A673 (cell line): ENCODE measurements at regions of chr11 and their contacts with region 1.

Region 1: DNA sequence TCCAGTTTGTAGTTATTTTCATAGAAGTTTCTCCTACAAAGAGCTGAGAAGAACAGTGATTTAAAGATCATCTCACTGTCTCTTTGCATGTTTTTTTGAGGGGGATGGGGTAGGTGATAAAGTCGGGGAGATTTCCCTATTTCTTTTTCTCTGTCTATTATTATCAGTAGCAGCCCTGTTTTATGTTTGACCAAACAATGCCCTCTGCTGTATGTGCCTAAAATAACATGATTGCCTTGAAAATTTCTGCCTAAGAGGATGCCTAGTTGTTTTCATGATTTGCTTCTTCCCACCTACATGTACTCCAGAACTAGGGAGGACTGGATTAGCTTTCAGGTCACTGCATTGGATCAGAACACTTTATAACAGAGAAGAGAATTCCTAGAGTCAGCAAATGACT is 1330.2 kb downstream of the LRRC4C start:
- DNase-seq: peak; percentile 90
- H3K4me3 ChIP-seq: no peak overlapping the region
- H3K27ac ChIP-seq: peak overlapping the region; percentile 31
- H3K4me1 ChIP-seq: peaks cover 69% of the 10 kb centered on the region
- H3K27me3 ChIP-seq: no peaks in the 10 kb centered on the region
- CTCF ChIP-seq: peak; percentile 93

Region 2: GRCh38 chr11:38835984-38836383 is 1293.3 kb before region 1 on chr11:
- CTCF ChIA-PET with region 1: no interaction called
- POLR2A ChIA-PET with region 1: no interaction called
- intact Hi-C with region 1: loop called (anchors 5 kb)
- DNase-seq: peak; percentile 97
- H3K4me3 ChIP-seq: no peak overlapping the region
- H3K27ac ChIP-seq: peak overlapping the region; percentile 9
- H3K4me1 ChIP-seq: peaks cover 19% of the 10 kb centered on the region
- H3K27me3 ChIP-seq: no peaks in the 10 kb centered on the region
- CTCF ChIP-seq: no peak

Region 3: DNA sequence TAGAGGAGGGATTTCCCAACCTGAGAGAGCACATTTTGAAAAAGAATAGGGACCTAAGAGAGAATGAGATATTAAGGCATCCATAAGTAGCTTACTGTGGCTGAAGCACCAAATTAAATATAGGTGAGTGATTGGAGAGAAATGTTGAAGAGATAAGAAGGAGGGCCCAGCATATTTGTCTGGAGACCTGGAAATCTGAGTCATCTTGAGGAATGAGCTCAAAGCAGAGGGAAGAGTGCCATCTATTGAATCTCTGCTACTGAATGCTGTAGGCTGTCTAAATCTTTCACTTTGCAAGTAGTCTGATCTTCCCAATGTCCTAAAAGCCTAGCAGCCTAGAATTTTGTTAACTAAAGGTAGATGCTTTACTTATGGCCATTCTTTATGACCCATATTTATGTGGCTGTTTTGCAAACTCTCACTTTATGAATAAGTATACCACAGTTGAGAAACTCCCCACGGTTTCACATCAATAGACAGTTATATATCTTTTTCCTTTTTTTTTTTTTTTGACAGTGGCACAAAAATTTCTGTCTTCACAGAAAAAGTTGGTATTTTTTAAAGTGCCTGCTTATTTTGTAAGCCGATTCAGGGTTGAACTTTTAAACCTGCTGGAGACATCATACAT is 763.3 kb before region 1 on chr11:
- CTCF ChIA-PET with region 1: interaction called, 5 read pairs
- POLR2A ChIA-PET with region 1: no interaction called
- intact Hi-C with region 1: loop called (anchors 1 kb)
- DNase-seq: peak; percentile 96
- H3K4me3 ChIP-seq: no peak overlapping the region
- H3K27ac ChIP-seq: peak overlapping the region; percentile 56
- H3K4me1 ChIP-seq: peaks cover 32% of the 10 kb centered on the region
- H3K27me3 ChIP-seq: no peaks in the 10 kb centered on the region
- CTCF ChIP-seq: peak; percentile 99

Region 4: GRCh38 chr11:39628311-39628710 is 501.0 kb before region 1 on chr11:
- CTCF ChIA-PET with region 1: no interaction called
- POLR2A ChIA-PET with region 1: no interaction called
- intact Hi-C with region 1: loop called (anchors 5 kb)
- DNase-seq: no peak
- H3K4me3 ChIP-seq: no peak overlapping the region
- H3K27ac ChIP-seq: no peak overlapping the region
- H3K4me1 ChIP-seq: peaks cover 13% of the 10 kb centered on the region
- H3K27me3 ChIP-seq: no peaks in the 10 kb centered on the region
- CTCF ChIP-seq: no peak

Region 5: GRCh38 chr11:40183073-40184064 is 54.1 kb after region 1 on chr11:
- CTCF ChIA-PET with region 1: no interaction called
- POLR2A ChIA-PET with region 1: no interaction called
- intact Hi-C with region 1: no loop called
- DNase-seq: no peak
- H3K4me3 ChIP-seq: no peak overlapping the region
- H3K27ac ChIP-seq: no peak overlapping the region
- H3K4me1 ChIP-seq: peaks cover 4% of the 10 kb centered on the region
- H3K27me3 ChIP-seq: no peaks in the 10 kb centered on the region
- CTCF ChIP-seq: no peak

Region 6: DNA sequence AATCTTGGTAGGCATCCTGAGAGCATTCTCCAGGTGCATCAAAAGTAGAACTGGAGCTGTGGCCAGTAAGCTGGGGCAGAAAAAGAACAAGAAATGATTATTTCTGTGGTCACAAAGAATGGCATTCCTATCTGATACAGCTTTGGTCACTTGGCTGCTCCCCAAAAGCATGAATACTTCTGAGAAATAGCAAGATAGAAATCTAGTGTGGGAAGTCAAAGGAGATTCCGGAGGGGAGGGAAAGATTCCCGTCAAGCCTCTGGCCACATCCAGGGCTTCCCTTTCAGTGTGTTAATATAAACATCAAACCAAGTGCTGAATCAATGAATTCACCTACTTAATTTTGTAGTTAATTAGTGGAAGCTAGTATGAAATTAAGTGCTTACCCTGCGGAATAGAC is 144.8 kb after region 1 on chr11:
- CTCF ChIA-PET with region 1: no interaction called
- POLR2A ChIA-PET with region 1: no interaction called
- intact Hi-C with region 1: no loop called
- DNase-seq: no peak
- H3K4me3 ChIP-seq: no peak overlapping the region
- H3K27ac ChIP-seq: no peak overlapping the region
- H3K4me1 ChIP-seq: peaks cover 20% of the 10 kb centered on the region
- H3K27me3 ChIP-seq: no peaks in the 10 kb centered on the region
- CTCF ChIP-seq: no peak

Region 7: GRCh38 chr11:40293655-40294348 is 164.5 kb after region 1 on chr11:
- CTCF ChIA-PET with region 1: interaction called, 11 read pairs
- POLR2A ChIA-PET with region 1: no interaction called
- intact Hi-C with region 1: loop called (anchors 1 kb)
- DNase-seq: peak; percentile 99
- H3K4me3 ChIP-seq: peak overlapping the region; percentile 61
- H3K27ac ChIP-seq: peak overlapping the region; percentile 78
- H3K4me1 ChIP-seq: peaks cover 11% of the 10 kb centered on the region
- H3K27me3 ChIP-seq: no peaks in the 10 kb centered on the region
- CTCF ChIP-seq: peak; percentile 100

Region 8: GRCh38 chr11:41201156-41201555 is 1071.9 kb after region 1 on chr11:
- CTCF ChIA-PET with region 1: interaction called, 3 read pairs
- POLR2A ChIA-PET with region 1: no interaction called
- intact Hi-C with region 1: loop called (anchors 2 kb)
- DNase-seq: peak; percentile 86
- H3K4me3 ChIP-seq: no peak overlapping the region
- H3K27ac ChIP-seq: no peak overlapping the region
- H3K4me1 ChIP-seq: no peaks in the 10 kb centered on the region
- H3K27me3 ChIP-seq: no peaks in the 10 kb centered on the region
- CTCF ChIP-seq: peak; percentile 90